CD8-positive, alpha-beta T cell (primary cell): ENCODE measurements at regions of chr2 and their contacts with region 1.

Region 1: DNA sequence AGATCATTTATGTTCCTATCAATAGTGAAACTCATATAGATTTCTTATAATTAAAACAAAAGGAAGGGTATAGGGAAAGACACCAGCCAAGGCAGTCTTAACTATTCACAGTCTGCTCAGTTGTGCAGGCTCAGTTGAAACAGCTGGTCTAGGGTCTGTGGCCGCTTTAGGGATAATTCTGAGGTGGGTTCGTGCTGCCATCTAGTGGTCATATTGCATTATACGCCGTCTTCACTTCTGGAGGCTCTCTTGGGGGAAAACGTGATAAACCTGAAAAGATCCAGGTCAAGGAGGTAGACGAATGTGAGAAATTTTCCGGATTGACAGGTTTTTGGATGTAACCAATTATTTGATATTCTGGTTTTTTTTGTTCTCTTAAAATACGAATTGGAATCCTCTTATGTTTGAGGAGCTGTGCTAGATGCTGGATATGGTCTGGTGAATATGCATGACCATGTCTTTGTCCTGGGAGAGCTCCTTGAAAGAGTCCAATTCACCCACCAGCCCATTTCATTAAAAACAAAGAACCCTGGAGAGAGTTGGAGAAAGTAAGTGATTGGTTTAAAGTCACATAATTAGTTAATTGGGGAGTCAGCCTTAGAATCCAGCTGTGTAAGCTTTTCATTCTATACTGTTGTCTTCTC is 492.4 kb downstream of the PLCL1 start:
- DNase-seq: peak; percentile 10 to 72 (median 60)
- ATAC-seq: peak; percentile 79
- H3K4me3 ChIP-seq: no peak overlapping the region
- H3K4me3 Mint-ChIP-seq: no peak overlapping the region
- H3K27ac ChIP-seq: no peak overlapping the region
- H3K27ac Mint-ChIP-seq: no peak overlapping the region
- H3K4me1 ChIP-seq: no peaks in the 10 kb centered on the region
- H3K4me1 Mint-ChIP-seq: peaks cover 2% of the 10 kb centered on the region
- H3K27me3 ChIP-seq: no peaks in the 10 kb centered on the region
- H3K27me3 Mint-ChIP-seq: peaks cover 29% of the 10 kb centered on the region
- CTCF ChIP-seq: peak; percentile 84

Region 2: GRCh38 chr2:197434541-197435513 is 862.0 kb before region 1 on chr2 and contains the start of gene SF3B1:
- CTCF ChIA-PET with region 1: no interaction called
- POLR2A ChIA-PET with region 1: no interaction called
- intact Hi-C with region 1: loop called in 1 of 2 experiments (anchors 10 kb)
- DNase-seq: peak; percentile 98 to 100 (median 99)
- ATAC-seq: peak; percentile 96
- H3K4me3 ChIP-seq: peak within 1 kb of the TSS; percentile 95 to 99
- H3K4me3 Mint-ChIP-seq: peak within 1 kb of the TSS; percentile 100
- H3K27ac ChIP-seq: peak within 1 kb of the TSS; percentile 98 to 99
- H3K27ac Mint-ChIP-seq: peak within 1 kb of the TSS; percentile 100
- H3K4me1 ChIP-seq: peaks cover 43% of the 10 kb centered on the region
- H3K4me1 Mint-ChIP-seq: peaks cover 53% of the 10 kb centered on the region
- H3K27me3 ChIP-seq: no peaks in the 10 kb centered on the region
- H3K27me3 Mint-ChIP-seq: no peaks in the 10 kb centered on the region
- CTCF ChIP-seq: no peak
- total RNA-seq, gene SF3B1: 525 to 526 TPM

Region 3: GRCh38 chr2:197799068-197799467 is 497.7 kb before region 1 on chr2:
- CTCF ChIA-PET with region 1: interaction called, 29 read pairs
- POLR2A ChIA-PET with region 1: no interaction called
- intact Hi-C with region 1: loop called (anchors 1 kb)
- DNase-seq: no peak
- ATAC-seq: no peak
- H3K4me3 ChIP-seq: no peak overlapping the region
- H3K4me3 Mint-ChIP-seq: no peak overlapping the region
- H3K27ac ChIP-seq: no peak overlapping the region
- H3K27ac Mint-ChIP-seq: no peak overlapping the region
- H3K4me1 ChIP-seq: peaks cover 12% of the 10 kb centered on the region
- H3K4me1 Mint-ChIP-seq: peaks cover 9% of the 10 kb centered on the region
- H3K27me3 ChIP-seq: no peaks in the 10 kb centered on the region
- H3K27me3 Mint-ChIP-seq: peaks cover 11% of the 10 kb centered on the region
- CTCF ChIP-seq: no peak

Region 4: GRCh38 chr2:197851451-197851850 is 445.3 kb before region 1 on chr2:
- CTCF ChIA-PET with region 1: interaction called, 3 read pairs
- POLR2A ChIA-PET with region 1: no interaction called
- intact Hi-C with region 1: loop called in 1 of 2 experiments (anchors 1 kb)
- DNase-seq: peak in 1 of 9 experiments; percentile 33
- ATAC-seq: no peak
- H3K4me3 ChIP-seq: no peak overlapping the region
- H3K4me3 Mint-ChIP-seq: no peak overlapping the region
- H3K27ac ChIP-seq: no peak overlapping the region
- H3K27ac Mint-ChIP-seq: no peak overlapping the region
- H3K4me1 ChIP-seq: peaks cover 23% of the 10 kb centered on the region
- H3K4me1 Mint-ChIP-seq: peaks cover 54% of the 10 kb centered on the region
- H3K27me3 ChIP-seq: no peaks in the 10 kb centered on the region
- H3K27me3 Mint-ChIP-seq: no peaks in the 10 kb centered on the region
- CTCF ChIP-seq: no peak

Region 5: GRCh38 chr2:198127627-198128026 is 169.2 kb before region 1 on chr2:
- CTCF ChIA-PET with region 1: interaction called, 3 read pairs
- POLR2A ChIA-PET with region 1: no interaction called
- intact Hi-C with region 1: loop called (anchors 2 to 5 kb)
- DNase-seq: peak; percentile 2 to 69 (median 32)
- ATAC-seq: peak; percentile 58
- H3K4me3 ChIP-seq: no peak overlapping the region
- H3K4me3 Mint-ChIP-seq: no peak overlapping the region
- H3K27ac ChIP-seq: no peak overlapping the region
- H3K27ac Mint-ChIP-seq: no peak overlapping the region
- H3K4me1 ChIP-seq: no peaks in the 10 kb centered on the region
- H3K4me1 Mint-ChIP-seq: no peaks in the 10 kb centered on the region
- H3K27me3 ChIP-seq: no peaks in the 10 kb centered on the region
- H3K27me3 Mint-ChIP-seq: no peaks in the 10 kb centered on the region
- CTCF ChIP-seq: peak; percentile 48

Region 6: GRCh38 chr2:198173242-198173641 is 123.5 kb before region 1 on chr2:
- CTCF ChIA-PET with region 1: no interaction called
- POLR2A ChIA-PET with region 1: no interaction called
- intact Hi-C with region 1: no loop called
- DNase-seq: no peak
- ATAC-seq: no peak
- H3K4me3 ChIP-seq: no peak overlapping the region
- H3K4me3 Mint-ChIP-seq: no peak overlapping the region
- H3K27ac ChIP-seq: no peak overlapping the region
- H3K27ac Mint-ChIP-seq: no peak overlapping the region
- H3K4me1 ChIP-seq: no peaks in the 10 kb centered on the region
- H3K4me1 Mint-ChIP-seq: no peaks in the 10 kb centered on the region
- H3K27me3 ChIP-seq: no peaks in the 10 kb centered on the region
- H3K27me3 Mint-ChIP-seq: peaks cover 3% of the 10 kb centered on the region
- CTCF ChIP-seq: no peak

Region 7: DNA sequence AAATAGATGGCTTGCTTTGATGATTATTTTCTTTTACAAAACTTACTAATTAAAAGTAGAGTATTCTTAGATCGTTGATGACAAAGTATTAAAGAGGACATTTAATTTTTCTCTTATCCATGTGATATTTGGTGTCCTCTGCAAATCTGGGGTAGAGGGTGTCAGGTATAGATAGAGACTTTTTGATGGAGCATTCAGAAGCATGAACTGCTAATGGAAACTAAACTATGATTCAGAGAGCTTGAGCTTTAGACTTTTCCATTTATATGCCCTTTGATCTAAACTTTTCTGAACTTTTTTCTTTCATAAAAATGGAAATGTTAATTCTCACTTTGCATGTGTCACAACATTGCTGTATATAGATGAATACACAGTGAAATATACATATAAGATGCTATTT is 127.3 kb after region 1 on chr2:
- CTCF ChIA-PET with region 1: no interaction called
- POLR2A ChIA-PET with region 1: no interaction called
- intact Hi-C with region 1: no loop called
- DNase-seq: no peak
- ATAC-seq: no peak
- H3K4me3 ChIP-seq: no peak overlapping the region
- H3K4me3 Mint-ChIP-seq: no peak overlapping the region
- H3K27ac ChIP-seq: no peak overlapping the region
- H3K27ac Mint-ChIP-seq: no peak overlapping the region
- H3K4me1 ChIP-seq: no peaks in the 10 kb centered on the region
- H3K4me1 Mint-ChIP-seq: no peaks in the 10 kb centered on the region
- H3K27me3 ChIP-seq: no peaks in the 10 kb centered on the region
- H3K27me3 Mint-ChIP-seq: no peaks in the 10 kb centered on the region
- CTCF ChIP-seq: no peak